Activated T-helper 1 cell treated with anti-CD3 and anti-CD28 coated beads, Interleukin-12 subunit alpha, Interleukin-12 subunit beta, Interleukin-2, Interleukin-4 antibody, amounts not matched to agents 30 ng/mL and 10 ng/mL and 1 ng/mL, durations not matched to agents 14 hours and 24 hours and 36 hours (primary cell): ENCODE measurements at regions of chr4 and their contacts with region 1.

Region 1: DNA sequence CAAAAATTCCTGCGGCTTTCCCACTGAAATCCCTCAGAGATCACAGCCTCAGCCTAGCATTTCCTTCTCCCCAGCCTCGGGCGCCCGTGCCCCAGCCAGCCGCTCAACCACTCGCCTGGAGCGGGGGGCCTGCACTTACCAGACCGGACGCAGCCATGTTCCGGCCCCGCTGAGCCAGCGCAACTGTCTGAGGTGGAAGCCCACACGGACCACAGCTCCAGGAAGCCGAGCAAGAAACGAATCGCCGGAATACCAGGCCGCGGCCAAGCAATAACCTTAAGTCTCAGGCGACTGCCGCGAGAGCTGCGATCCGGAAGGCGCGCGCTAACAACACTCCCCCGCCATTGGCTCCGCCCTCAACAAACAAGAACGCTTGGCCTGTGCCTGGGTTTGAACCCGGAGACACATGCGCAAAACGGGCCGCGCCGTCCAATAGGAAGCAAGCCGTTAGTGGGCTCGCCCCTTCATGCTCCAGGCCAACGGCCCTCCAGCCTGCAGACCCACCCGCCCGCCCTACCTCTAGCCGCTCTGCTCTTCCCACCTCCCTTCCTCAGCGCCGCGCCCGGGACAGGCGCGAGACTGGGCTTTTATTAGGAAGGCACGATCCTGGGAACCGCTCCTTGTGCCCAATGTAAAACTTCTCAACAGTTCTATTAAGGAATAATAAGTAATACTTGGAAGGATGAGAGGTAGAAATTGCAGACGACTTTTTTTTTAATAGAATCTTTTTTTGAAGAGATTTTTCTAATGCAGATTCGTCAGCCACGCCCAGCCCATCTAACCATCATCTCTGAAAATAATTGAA is at the start of gene CENPC:
- DNase-seq: peak; percentile 90
- H3K4me3 Mint-ChIP-seq: peak within 1 kb of the TSS; percentile 100
- H3K27ac Mint-ChIP-seq: peak within 1 kb of the TSS; percentile 98
- H3K4me1 Mint-ChIP-seq: peaks cover 47% of the 10 kb centered on the region
- H3K27me3 Mint-ChIP-seq: no peaks in the 10 kb centered on the region
- total RNA-seq, gene CENPC: 27.7 and 29.2 TPM in 2 replicates

Region 2: DNA sequence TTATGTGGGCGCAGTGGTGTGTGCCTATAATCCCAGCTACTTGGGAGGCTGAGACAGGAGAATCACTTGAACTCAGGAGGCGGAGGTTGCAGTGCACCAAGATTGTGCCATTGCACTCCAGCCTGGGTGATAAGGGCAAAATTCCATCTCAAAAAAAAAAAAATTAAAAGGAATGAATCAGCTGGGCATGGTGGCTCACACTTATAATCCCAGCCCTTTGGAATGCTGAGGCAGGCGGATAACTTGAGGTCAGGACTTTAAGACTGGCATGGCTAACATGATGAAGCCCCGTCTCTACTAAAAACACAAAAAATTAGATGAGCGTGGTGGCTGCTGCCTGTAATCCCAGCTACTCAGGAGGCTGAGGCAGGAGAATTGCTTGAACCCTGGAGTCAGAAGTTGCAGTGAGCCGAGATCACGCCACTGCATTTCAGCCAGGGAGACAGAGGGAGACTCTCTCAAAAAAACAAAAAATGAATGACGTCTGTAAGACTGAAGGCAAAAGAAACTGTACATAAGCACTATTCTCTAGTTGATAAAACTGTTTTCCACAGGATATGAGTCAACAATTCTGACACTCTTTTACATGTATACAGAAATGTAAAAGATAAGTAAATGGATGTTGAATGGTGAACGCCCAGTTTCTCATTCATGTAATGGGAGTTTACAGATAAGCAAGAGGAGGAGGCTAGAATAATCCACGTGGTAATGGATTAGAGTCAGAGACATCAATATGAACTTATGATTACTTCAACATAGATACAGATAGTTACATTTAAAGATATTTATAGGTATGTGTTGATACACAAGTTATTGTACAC is 22.3 kb before region 1 on chr4:
- intact Hi-C with region 1: loop called (anchors 1 kb)
- DNase-seq: no peak
- H3K4me3 Mint-ChIP-seq: peak overlapping the region; percentile 19
- H3K27ac Mint-ChIP-seq: peak overlapping the region; percentile 92
- H3K4me1 Mint-ChIP-seq: peaks cover 65% of the 10 kb centered on the region
- H3K27me3 Mint-ChIP-seq: no peaks in the 10 kb centered on the region

Region 3: GRCh38 chr4:67558493-67558892 is 13.1 kb after region 1 on chr4 and contains the start of gene STAP1:
- intact Hi-C with region 1: loop called (anchors 1 kb)
- DNase-seq: peak; percentile 42
- H3K4me3 Mint-ChIP-seq: peak within 1 kb of the TSS; percentile 95
- H3K27ac Mint-ChIP-seq: peak within 1 kb of the TSS; percentile 94
- H3K4me1 Mint-ChIP-seq: peaks cover 51% of the 10 kb centered on the region
- H3K27me3 Mint-ChIP-seq: no peaks in the 10 kb centered on the region
- total RNA-seq, gene STAP1: 19.2 and 19.7 TPM in 2 replicates

Region 4: GRCh38 chr4:67632492-67632891 is 87.1 kb after region 1 on chr4:
- intact Hi-C with region 1: loop called (anchors 2 kb)
- DNase-seq: no peak
- H3K4me3 Mint-ChIP-seq: peak overlapping the region; percentile 85
- H3K27ac Mint-ChIP-seq: peak overlapping the region; percentile 79
- H3K4me1 Mint-ChIP-seq: peaks cover 34% of the 10 kb centered on the region
- H3K27me3 Mint-ChIP-seq: no peaks in the 10 kb centered on the region

Region 5: GRCh38 chr4:67746797-67747495 is 201.5 kb after region 1 on chr4:
- intact Hi-C with region 1: loop called (anchors 1 kb)
- DNase-seq: no peak
- H3K4me3 Mint-ChIP-seq: no peak overlapping the region
- H3K27ac Mint-ChIP-seq: no peak overlapping the region
- H3K4me1 Mint-ChIP-seq: peaks cover 13% of the 10 kb centered on the region
- H3K27me3 Mint-ChIP-seq: no peaks in the 10 kb centered on the region

Region 6: DNA sequence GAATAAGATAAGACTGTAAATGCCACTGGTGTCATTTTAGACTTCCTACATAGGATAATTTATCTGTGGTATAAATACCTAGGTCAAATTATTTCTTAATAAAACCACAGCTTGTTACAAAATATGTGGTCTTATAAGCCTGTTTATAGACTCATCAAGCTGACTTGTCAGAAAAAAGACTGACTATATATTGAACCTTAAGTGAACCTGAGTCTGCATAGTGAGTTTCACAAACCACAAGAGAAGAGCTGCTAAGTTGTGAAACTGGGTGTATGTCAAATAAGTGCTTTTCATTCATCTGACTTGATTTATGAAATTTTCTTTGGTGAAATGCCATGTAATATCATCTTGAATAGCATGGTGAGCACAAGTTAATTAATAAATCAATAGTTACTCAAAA is 466.3 kb after region 1 on chr4:
- intact Hi-C with region 1: no loop called
- DNase-seq: no peak
- H3K4me3 Mint-ChIP-seq: no peak overlapping the region
- H3K27ac Mint-ChIP-seq: no peak overlapping the region
- H3K4me1 Mint-ChIP-seq: no peaks in the 10 kb centered on the region
- H3K27me3 Mint-ChIP-seq: no peaks in the 10 kb centered on the region

Region 7: GRCh38 chr4:68349649-68350360 is 804.4 kb after region 1 on chr4 and contains the start of gene YTHDC1:
- intact Hi-C with region 1: loop called (anchors 1 kb)
- DNase-seq: peak; percentile 90
- H3K4me3 Mint-ChIP-seq: peak within 1 kb of the TSS; percentile 91
- H3K27ac Mint-ChIP-seq: peak within 1 kb of the TSS; percentile 96
- H3K4me1 Mint-ChIP-seq: peaks cover 36% of the 10 kb centered on the region
- H3K27me3 Mint-ChIP-seq: peaks cover 12% of the 10 kb centered on the region
- total RNA-seq, gene YTHDC1: 75.6 and 82.3 TPM in 2 replicates